ENCODE measurements at regions of chr19 and their contacts with region 1.

Region 1: GRCh38 chr19:49546825-49547565 is 19.2 kb downstream of the RCN3 start:
- DNase-seq: peak in 6 of 10 donors; percentile 53 to 81 (median 70)
- H3K4me3 ChIP-seq: peak overlapping the region in 2 of 59 donors; percentile 2 to 34
- H3K27ac ChIP-seq: peak overlapping the region in 24 of 59 donors; percentile 0 to 73 (median 47)
- H3K27me3 ChIP-seq: no peaks in the 10 kb centered on the region
- CTCF ChIP-seq: peak; percentile 78 to 97 (median 91)

Region 2: GRCh38 chr19:49391581-49392399 is 155.2 kb before region 1 on chr19:
- intact Hi-C with region 1: loop called in 1 of 2 experiments (anchors 5 kb)
- DNase-seq: peak; percentile 28 to 91 (median 73)
- H3K4me3 ChIP-seq: no peak overlapping the region
- H3K27ac ChIP-seq: peak overlapping the region in 2 of 59 donors; percentile 21 to 63
- H3K27me3 ChIP-seq: peaks cover 0 to 20% (median 0%) of the 10 kb centered on the region in 45 donors
- CTCF ChIP-seq: peak; percentile 24 to 85 (median 72)

Region 3: DNA sequence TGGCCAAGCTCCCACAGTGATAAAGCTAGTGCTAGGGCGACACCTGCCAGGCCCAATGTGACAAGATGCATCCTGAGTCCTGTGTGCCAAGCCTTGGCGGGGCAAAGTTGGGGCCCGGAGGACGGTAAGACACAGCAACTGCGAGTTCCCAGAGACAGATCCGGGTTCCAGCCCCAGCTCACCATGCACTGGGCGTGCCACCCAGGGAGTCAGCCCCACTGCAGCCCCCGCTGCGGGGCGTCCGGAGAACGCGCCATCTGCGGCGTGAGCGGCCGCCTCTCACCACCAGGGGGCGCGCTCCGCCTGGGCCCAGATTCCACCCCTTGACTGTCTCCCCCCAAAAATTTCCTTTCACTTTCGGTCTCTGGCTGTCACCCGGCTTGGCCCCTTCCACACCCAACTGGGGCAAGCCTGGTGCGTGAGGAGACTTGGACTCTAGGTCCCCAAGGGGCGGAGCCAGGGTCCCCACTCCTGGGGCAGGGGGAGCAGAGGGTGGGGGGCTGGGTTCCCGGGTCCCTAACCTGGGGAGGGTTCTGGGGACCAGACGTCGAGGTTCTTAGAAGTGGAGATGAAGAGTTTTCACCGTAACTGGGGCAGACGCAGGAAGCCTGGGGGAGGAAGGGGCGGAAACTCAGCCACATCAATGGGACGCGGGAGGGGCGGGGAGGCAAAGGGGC is 73.0 kb before region 1 on chr19 and contains the start of gene FLT3LG:
- intact Hi-C with region 1: loop called (anchors 2 kb)
- DNase-seq: peak in 8 of 10 donors; percentile 14 to 77 (median 46)
- H3K4me3 ChIP-seq: peak within 1 kb of the TSS; percentile 49 to 89 (median 70)
- H3K27ac ChIP-seq: peak within 1 kb of the TSS in 51 of 59 donors; percentile 15 to 90 (median 70)
- H3K27me3 ChIP-seq: no peaks in the 10 kb centered on the region
- CTCF ChIP-seq: peak; percentile 90 to 100 (median 98)
- total RNA-seq, gene FLT3LG: 1.7 to 11.9 (median 4.6) TPM

Region 4: GRCh38 chr19:49502866-49503581 is 44.0 kb before region 1 on chr19:
- intact Hi-C with region 1: loop called (anchors 2 to 5 kb)
- DNase-seq: peak in 1 of 10 donors; percentile 37
- H3K4me3 ChIP-seq: no peak overlapping the region
- H3K27ac ChIP-seq: no peak overlapping the region
- H3K27me3 ChIP-seq: no peaks in the 10 kb centered on the region
- CTCF ChIP-seq: peak in 53 of 56 donors; percentile 35 to 77 (median 57)

Measured in dorsolateral prefrontal cortex (tissue), 120 donors.